ENCODE measurements at regions of chr6 and their contacts with region 1.

Region 1: DNA sequence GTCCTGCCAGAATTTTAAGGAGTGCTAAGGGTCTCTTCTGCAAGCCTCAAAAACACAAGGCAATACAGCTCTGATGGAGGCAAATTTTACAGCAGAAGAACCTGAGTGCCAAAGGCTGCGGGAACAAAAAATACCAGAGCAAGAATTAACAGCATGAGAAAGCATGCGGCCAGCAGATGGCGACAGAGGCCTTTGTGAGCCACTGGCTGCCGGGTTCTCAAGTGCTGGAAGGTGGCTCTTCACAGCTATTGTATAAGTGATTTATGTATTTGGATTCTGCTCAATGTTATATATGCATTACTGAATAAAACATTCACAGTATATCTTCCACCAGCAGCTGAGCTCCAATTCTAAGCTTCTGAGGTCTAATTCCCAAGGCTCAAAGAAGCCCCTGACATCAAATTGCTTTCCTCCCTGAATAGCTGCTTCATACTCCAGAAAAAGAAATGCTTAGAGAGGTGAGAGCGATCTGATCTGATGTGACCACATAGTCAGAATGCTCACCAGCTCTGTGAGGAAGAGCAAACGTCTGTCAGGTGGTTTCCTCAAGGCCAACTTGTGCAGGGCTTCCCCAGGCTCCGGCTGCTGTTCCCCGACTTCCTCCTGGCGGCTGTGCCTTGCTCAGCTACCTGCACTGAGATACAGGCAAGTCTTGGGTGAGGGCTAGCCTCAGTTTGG is 58.6 kb downstream of the PPP1R3G start:
- DNase-seq: peak; percentile 86
- H3K4me3 ChIP-seq: no peak overlapping the region
- H3K27ac ChIP-seq: no peak overlapping the region
- H3K4me1 ChIP-seq: no peaks in the 10 kb centered on the region
- H3K27me3 ChIP-seq: no peaks in the 10 kb centered on the region
- CTCF ChIP-seq: peak; percentile 89

Region 2: GRCh38 chr6:5302995-5303622 is 159.3 kb after region 1 on chr6:
- intact Hi-C with region 1: loop called (anchors 5 kb)
- DNase-seq: peak; percentile 62
- H3K4me3 ChIP-seq: no peak overlapping the region
- H3K27ac ChIP-seq: no peak overlapping the region
- H3K4me1 ChIP-seq: no peaks in the 10 kb centered on the region
- H3K27me3 ChIP-seq: no peaks in the 10 kb centered on the region
- CTCF ChIP-seq: peak; percentile 58

Region 3: GRCh38 chr6:5379647-5380242 is 236.0 kb after region 1 on chr6:
- intact Hi-C with region 1: loop called (anchors 5 kb)
- DNase-seq: peak; percentile 34
- H3K4me3 ChIP-seq: no peak overlapping the region
- H3K27ac ChIP-seq: no peak overlapping the region
- H3K4me1 ChIP-seq: no peaks in the 10 kb centered on the region
- H3K27me3 ChIP-seq: no peaks in the 10 kb centered on the region
- CTCF ChIP-seq: peak; percentile 73

Region 4: GRCh38 chr6:5398530-5398929 is 254.8 kb after region 1 on chr6:
- intact Hi-C with region 1: loop called (anchors 5 kb)
- DNase-seq: no peak
- H3K4me3 ChIP-seq: no peak overlapping the region
- H3K27ac ChIP-seq: no peak overlapping the region
- H3K4me1 ChIP-seq: no peaks in the 10 kb centered on the region
- H3K27me3 ChIP-seq: no peaks in the 10 kb centered on the region
- CTCF ChIP-seq: peak; percentile 39

Region 5: DNA sequence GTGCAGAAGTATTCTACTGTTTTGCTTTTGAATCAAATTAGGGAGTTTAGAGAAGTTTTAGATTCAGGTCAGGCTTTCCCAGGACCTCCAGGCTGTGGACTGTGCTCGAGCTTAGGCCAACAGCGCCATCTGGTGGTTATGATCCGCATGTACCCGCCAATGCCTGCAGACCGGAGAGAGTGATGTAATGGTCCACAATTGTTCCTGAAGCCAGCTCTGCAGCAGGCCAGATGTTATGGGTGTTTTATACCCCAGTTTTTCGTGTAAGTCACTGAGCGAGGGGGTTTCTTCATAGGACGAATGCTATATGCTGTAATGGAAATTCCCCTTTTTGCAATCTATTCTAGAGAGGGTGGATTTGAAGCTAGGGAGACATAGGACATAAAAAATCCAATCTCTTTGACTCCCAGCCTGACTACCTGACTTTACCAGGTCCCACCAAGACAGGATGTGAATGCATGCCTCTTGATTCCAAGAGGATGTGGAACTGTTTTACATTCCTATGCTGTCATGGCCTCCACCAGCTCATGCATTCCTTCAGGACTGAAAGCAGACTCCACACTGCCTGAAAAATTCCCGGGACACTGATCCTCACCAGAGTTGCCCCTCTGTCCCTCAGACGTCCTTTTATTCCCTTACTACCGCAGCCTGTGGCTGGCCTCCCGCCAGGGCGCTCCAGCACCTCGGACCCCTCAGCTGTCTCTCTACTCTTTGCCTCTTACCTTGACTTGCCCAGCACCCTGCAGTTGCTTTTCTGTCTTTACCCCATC is 1403.5 kb after region 1 on chr6:
- intact Hi-C with region 1: loop called (anchors 10 kb)
- DNase-seq: peak; percentile 87
- H3K4me3 ChIP-seq: peak overlapping the region; percentile 31
- H3K27ac ChIP-seq: no peak overlapping the region
- H3K4me1 ChIP-seq: peaks cover 10% of the 10 kb centered on the region
- H3K27me3 ChIP-seq: peaks cover 23% of the 10 kb centered on the region
- CTCF ChIP-seq: peak; percentile 92

Measured in colonic mucosa (tissue), 4 donors.